ENCODE measurements at regions of chr10 and their contacts with region 1.

Region 1: GRCh38 chr10:132508581-132509428 is 28.8 kb upstream of the INPP5A start:
- DNase-seq: peak; percentile 35 to 88
- H3K4me3 ChIP-seq: no peak overlapping the region
- H3K27ac ChIP-seq: peak overlapping the region; percentile 25 to 26
- H3K4me1 ChIP-seq: peaks cover 0 to 5% of the 10 kb centered on the region in 2 donors
- H3K27me3 ChIP-seq: no peaks in the 10 kb centered on the region
- CTCF ChIP-seq: peak; percentile 60 to 71 (median 65)

Region 2: GRCh38 chr10:132421931-132422751 is 86.7 kb before region 1 on chr10:
- intact Hi-C with region 1: no loop called
- DNase-seq: no peak
- H3K4me3 ChIP-seq: peak overlapping the region; percentile 18 to 56
- H3K27ac ChIP-seq: peak overlapping the region; percentile 84 to 86
- H3K4me1 ChIP-seq: peaks cover 13 to 31% of the 10 kb centered on the region in 2 donors
- H3K27me3 ChIP-seq: no peaks in the 10 kb centered on the region
- CTCF ChIP-seq: no peak

Region 3: GRCh38 chr10:132458593-132459300 is 50.1 kb before region 1 on chr10:
- intact Hi-C with region 1: loop called (anchors 2 kb)
- DNase-seq: no peak
- H3K4me3 ChIP-seq: no peak overlapping the region
- H3K27ac ChIP-seq: no peak overlapping the region
- H3K4me1 ChIP-seq: peaks cover 5 to 6% of the 10 kb centered on the region in 2 donors
- H3K27me3 ChIP-seq: no peaks in the 10 kb centered on the region
- CTCF ChIP-seq: peak; percentile 93 to 99 (median 98)

Region 4: GRCh38 chr10:132571650-132572535 is 63.1 kb after region 1 on chr10:
- intact Hi-C with region 1: loop called (anchors 2 kb)
- DNase-seq: peak; percentile 48 to 84
- H3K4me3 ChIP-seq: peak overlapping the region in 1 of 2 donors; percentile 34
- H3K27ac ChIP-seq: peak overlapping the region; percentile 70 to 78
- H3K4me1 ChIP-seq: peaks cover 35 to 49% of the 10 kb centered on the region in 2 donors
- H3K27me3 ChIP-seq: no peaks in the 10 kb centered on the region
- CTCF ChIP-seq: no peak

Measured in ascending aorta (tissue), 2 donors.